Gastrocnemius medialis (tissue), 4 donors: ENCODE measurements at regions of chr15 and their contacts with region 1.

Region 1: DNA sequence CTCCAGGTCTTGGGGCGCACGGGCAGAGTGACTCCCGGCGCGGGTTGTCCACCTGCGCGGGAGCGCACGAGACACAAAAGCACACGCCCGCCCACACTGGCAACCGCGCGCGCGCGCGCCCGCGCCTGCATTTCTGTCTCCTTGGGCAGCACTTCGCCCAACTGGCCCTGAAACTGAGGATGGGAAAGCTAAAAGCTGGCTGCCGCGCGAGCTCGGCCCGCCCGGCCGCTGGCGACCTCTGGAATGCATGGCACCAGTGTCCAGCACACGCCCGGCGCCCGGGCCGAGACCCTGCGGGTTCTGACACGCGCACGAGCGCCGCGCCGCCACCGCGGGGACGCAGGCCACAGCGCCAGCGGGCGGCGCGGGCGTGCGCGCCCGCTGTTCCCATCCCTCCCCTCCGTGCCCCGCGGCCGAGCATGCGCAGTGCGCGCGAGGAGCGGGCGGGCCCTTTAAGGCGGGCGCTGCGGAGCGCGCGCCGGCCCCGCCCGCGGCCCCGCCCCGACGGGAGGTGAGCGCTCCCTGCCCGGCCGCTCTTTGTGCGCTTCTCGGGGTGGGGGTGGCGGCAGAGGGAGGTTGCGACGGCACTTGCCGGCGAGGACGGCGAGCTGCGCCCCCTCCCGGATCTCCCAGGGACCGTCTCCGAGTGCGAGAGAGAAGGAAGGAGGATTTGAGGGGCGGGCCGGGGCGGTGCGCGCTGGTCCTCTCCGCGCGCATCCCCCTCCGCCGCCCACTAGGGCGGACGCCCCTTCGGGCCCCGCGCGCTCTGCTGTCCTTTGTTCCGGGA is 1.0 kb upstream of the MEX3B start:
- DNase-seq: peak; percentile 78 to 87
- ATAC-seq: peak; percentile 68 to 73
- H3K4me3 ChIP-seq: peak overlapping the region; percentile 76 to 96 (median 86)
- H3K27ac ChIP-seq: peak overlapping the region; percentile 92 to 94 (median 92)
- H3K4me1 ChIP-seq: peaks cover 8 to 13% of the 10 kb centered on the region in 2 donors
- H3K27me3 ChIP-seq: peaks cover 0 to 6% (median 0%) of the 10 kb centered on the region in 3 donors
- CTCF ChIP-seq: peak; percentile 53 to 92 (median 82)
- POLR2A ChIP-seq: peak; percentile 79 to 85

Region 2: GRCh38 chr15:81000624-81001151 is 1046.2 kb before region 1 on chr15 and contains the start of gene TLNRD1:
- in situ Hi-C with region 1: no loop called
- intact Hi-C with region 1: loop called (anchors 5 kb)
- DNase-seq: peak; percentile 68 to 74
- ATAC-seq: peak; percentile 61 to 62
- H3K4me3 ChIP-seq: peak within 1 kb of the TSS; percentile 61 to 93 (median 74)
- H3K27ac ChIP-seq: peak within 1 kb of the TSS; percentile 70 to 87 (median 84)
- H3K4me1 ChIP-seq: peaks cover 0 to 10% of the 10 kb centered on the region in 2 donors
- H3K27me3 ChIP-seq: peaks cover 8 to 31% (median 12%) of the 10 kb centered on the region in 3 donors
- CTCF ChIP-seq: no peak
- POLR2A ChIP-seq: peak; percentile 68 to 82
- total RNA-seq, gene TLNRD1: 1.9 to 8.1 (median 3.3) TPM

Region 3: GRCh38 chr15:81091889-81092558 is 954.8 kb before region 1 on chr15:
- in situ Hi-C with region 1: no loop called
- intact Hi-C with region 1: loop called (anchors 5 kb)
- DNase-seq: peak; percentile 82 to 85
- ATAC-seq: peak; percentile 100
- H3K4me3 ChIP-seq: peak overlapping the region in 2 of 4 donors; percentile 7 to 23
- H3K27ac ChIP-seq: peak overlapping the region; percentile 73 to 83 (median 80)
- H3K4me1 ChIP-seq: peaks cover 13 to 18% of the 10 kb centered on the region in 2 donors
- H3K27me3 ChIP-seq: no peaks in the 10 kb centered on the region
- CTCF ChIP-seq: no peak
- POLR2A ChIP-seq: no peak

Region 4: DNA sequence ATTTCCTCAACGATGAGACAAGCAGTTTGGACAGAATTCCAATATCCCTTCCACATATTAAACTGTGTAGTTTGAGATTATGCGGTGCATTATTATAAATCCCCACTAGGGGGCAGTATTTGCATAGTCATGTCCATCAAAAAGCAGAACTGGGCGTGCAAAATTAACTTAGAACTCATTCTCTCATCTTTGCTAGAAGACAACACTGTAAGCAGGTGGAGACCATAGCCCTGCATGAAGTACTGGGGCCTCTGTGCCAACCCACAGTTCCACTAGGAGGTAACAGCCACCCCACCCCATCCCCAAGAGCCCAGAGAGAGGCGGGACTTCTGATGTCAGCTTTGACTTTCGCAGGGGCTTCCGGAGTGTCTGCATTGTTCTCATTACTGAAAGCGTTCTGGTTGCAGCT is 566.2 kb before region 1 on chr15:
- in situ Hi-C with region 1: loop called in 3 of 4 experiments (anchors 10 to 25 kb)
- intact Hi-C with region 1: loop called (anchors 1 kb)
- DNase-seq: no peak
- ATAC-seq: peak; percentile 52 to 75
- H3K4me3 ChIP-seq: no peak overlapping the region
- H3K27ac ChIP-seq: no peak overlapping the region
- H3K4me1 ChIP-seq: no peaks in the 10 kb centered on the region
- H3K27me3 ChIP-seq: no peaks in the 10 kb centered on the region
- CTCF ChIP-seq: peak; percentile 69 to 85 (median 82)
- POLR2A ChIP-seq: no peak

Region 5: GRCh38 chr15:82021992-82022391 is 24.9 kb before region 1 on chr15:
- in situ Hi-C with region 1: no loop called
- intact Hi-C with region 1: no loop called
- DNase-seq: no peak
- ATAC-seq: no peak
- H3K4me3 ChIP-seq: no peak overlapping the region
- H3K27ac ChIP-seq: no peak overlapping the region
- H3K4me1 ChIP-seq: no peaks in the 10 kb centered on the region
- H3K27me3 ChIP-seq: no peaks in the 10 kb centered on the region
- CTCF ChIP-seq: no peak
- POLR2A ChIP-seq: no peak

Region 6: GRCh38 chr15:82139823-82140268 is 93.0 kb after region 1 on chr15:
- in situ Hi-C with region 1: no loop called
- intact Hi-C with region 1: loop called (anchors 10 kb)
- DNase-seq: no peak
- ATAC-seq: no peak
- H3K4me3 ChIP-seq: no peak overlapping the region
- H3K27ac ChIP-seq: no peak overlapping the region
- H3K4me1 ChIP-seq: no peaks in the 10 kb centered on the region
- H3K27me3 ChIP-seq: no peaks in the 10 kb centered on the region
- CTCF ChIP-seq: peak; percentile 38 to 70 (median 63)
- POLR2A ChIP-seq: no peak

Region 7: GRCh38 chr15:82197733-82198594 is 151.1 kb after region 1 on chr15:
- in situ Hi-C with region 1: no loop called
- intact Hi-C with region 1: loop called (anchors 2 kb)
- DNase-seq: peak; percentile 60 to 62
- ATAC-seq: peak; percentile 78 to 81
- H3K4me3 ChIP-seq: no peak overlapping the region
- H3K27ac ChIP-seq: peak overlapping the region in 2 of 4 donors; percentile 2 to 36
- H3K4me1 ChIP-seq: peaks cover 27 to 32% of the 10 kb centered on the region in 2 donors
- H3K27me3 ChIP-seq: no peaks in the 10 kb centered on the region
- CTCF ChIP-seq: peak; percentile 64 to 86 (median 81)
- POLR2A ChIP-seq: no peak